ENCODE measurements at regions of chr17 and their contacts with region 1.

Region 1: DNA sequence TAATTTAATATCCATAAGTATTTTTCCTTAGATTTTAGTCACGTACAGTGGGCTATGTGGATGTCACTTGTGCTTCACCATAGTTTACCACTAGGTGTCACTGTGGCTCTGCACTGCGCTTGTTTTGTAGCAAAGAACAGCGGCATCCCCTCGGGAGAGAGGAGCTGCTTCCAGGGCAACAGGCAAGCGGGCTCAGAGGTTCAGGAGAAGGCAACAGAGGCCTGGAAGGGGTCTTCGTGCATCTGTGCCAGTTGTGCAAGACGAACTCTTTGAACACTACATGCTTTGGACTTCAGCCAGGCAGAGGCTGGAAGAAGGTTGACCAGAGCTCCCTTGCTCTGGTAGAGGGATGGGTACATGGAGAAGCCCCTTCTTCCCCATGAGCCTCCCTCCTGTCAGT is 20.6 kb downstream of the CYB561 start:
- DNase-seq: peak; percentile 78 to 94
- H3K4me3 ChIP-seq: no peak overlapping the region
- H3K27ac ChIP-seq: no peak overlapping the region
- H3K4me1 ChIP-seq: peaks cover 0 to 18% (median 12%) of the 10 kb centered on the region in 4 donors
- H3K27me3 ChIP-seq: no peaks in the 10 kb centered on the region
- CTCF ChIP-seq: peak in 5 of 7 experiments; percentile 85 to 93 (median 92)
- EP300 ChIP-seq: no peak
- POLR2A ChIP-seq: no peak

Region 2: GRCh38 chr17:62703775-62704378 is 721.6 kb before region 1 on chr17:
- intact Hi-C with region 1: loop called (anchors 10 kb)
- DNase-seq: peak; percentile 83 to 91
- H3K4me3 ChIP-seq: peak overlapping the region; percentile 65 to 72 (median 69)
- H3K27ac ChIP-seq: peak overlapping the region; percentile 59 to 88 (median 81)
- H3K4me1 ChIP-seq: peaks cover 16 to 34% (median 28%) of the 10 kb centered on the region in 4 donors
- H3K27me3 ChIP-seq: peaks cover 0 to 8% (median 0%) of the 10 kb centered on the region in 3 donors
- CTCF ChIP-seq: peak in 5 of 7 experiments; percentile 60 to 89 (median 76)
- EP300 ChIP-seq: no peak
- POLR2A ChIP-seq: no peak

Region 3: GRCh38 chr17:63332286-63332685 is 93.2 kb before region 1 on chr17:
- intact Hi-C with region 1: no loop called
- DNase-seq: no peak
- H3K4me3 ChIP-seq: no peak overlapping the region
- H3K27ac ChIP-seq: no peak overlapping the region
- H3K4me1 ChIP-seq: peaks cover 0 to 4% (median 0%) of the 10 kb centered on the region in 4 donors
- H3K27me3 ChIP-seq: no peaks in the 10 kb centered on the region
- CTCF ChIP-seq: no peak
- EP300 ChIP-seq: no peak
- POLR2A ChIP-seq: no peak

Region 4: GRCh38 chr17:63478791-63479494 is 53.5 kb after region 1 on chr17:
- intact Hi-C with region 1: loop called (anchors 5 kb)
- DNase-seq: peak; percentile 88 to 94
- H3K4me3 ChIP-seq: peak overlapping the region in 1 of 4 donors; percentile 5
- H3K27ac ChIP-seq: no peak overlapping the region
- H3K4me1 ChIP-seq: peaks cover 24 to 54% (median 45%) of the 10 kb centered on the region in 4 donors
- H3K27me3 ChIP-seq: peaks cover 0 to 64% (median 20%) of the 10 kb centered on the region in 3 donors
- CTCF ChIP-seq: peak in 5 of 7 experiments; percentile 54 to 85 (median 75)
- EP300 ChIP-seq: no peak
- POLR2A ChIP-seq: no peak

Region 5: GRCh38 chr17:63611354-63611753 is 185.9 kb after region 1 on chr17:
- intact Hi-C with region 1: loop called (anchors 5 kb)
- DNase-seq: no peak
- H3K4me3 ChIP-seq: no peak overlapping the region
- H3K27ac ChIP-seq: no peak overlapping the region
- H3K4me1 ChIP-seq: peaks cover 0 to 6% (median 0%) of the 10 kb centered on the region in 4 donors
- H3K27me3 ChIP-seq: no peaks in the 10 kb centered on the region
- CTCF ChIP-seq: no peak
- EP300 ChIP-seq: no peak
- POLR2A ChIP-seq: no peak

Measured in stomach (tissue), 19 donors.